ENCODE measurements at regions of chr17 and their contacts with region 1.

Region 1: GRCh38 chr17:32783602-32784001 is 93.3 kb downstream of the MYO1D start:
- DNase-seq: peak; percentile 53
- H3K4me3 Mint-ChIP-seq: no peak overlapping the region
- H3K27ac Mint-ChIP-seq: peak overlapping the region; percentile 73
- H3K4me1 Mint-ChIP-seq: peaks cover 5% of the 10 kb centered on the region
- H3K27me3 Mint-ChIP-seq: no peaks in the 10 kb centered on the region
- CTCF ChIP-seq: peak; percentile 63

Region 2: GRCh38 chr17:32769839-32770238 is 13.8 kb before region 1 on chr17:
- CTCF ChIA-PET with region 1: interaction called, 35 read pairs
- POLR2A ChIA-PET with region 1: interaction called, 6 read pairs
- intact Hi-C with region 1: no loop called
- DNase-seq: peak; percentile 71
- H3K4me3 Mint-ChIP-seq: no peak overlapping the region
- H3K27ac Mint-ChIP-seq: no peak overlapping the region
- H3K4me1 Mint-ChIP-seq: no peaks in the 10 kb centered on the region
- H3K27me3 Mint-ChIP-seq: no peaks in the 10 kb centered on the region
- CTCF ChIP-seq: peak; percentile 49

Region 3: DNA sequence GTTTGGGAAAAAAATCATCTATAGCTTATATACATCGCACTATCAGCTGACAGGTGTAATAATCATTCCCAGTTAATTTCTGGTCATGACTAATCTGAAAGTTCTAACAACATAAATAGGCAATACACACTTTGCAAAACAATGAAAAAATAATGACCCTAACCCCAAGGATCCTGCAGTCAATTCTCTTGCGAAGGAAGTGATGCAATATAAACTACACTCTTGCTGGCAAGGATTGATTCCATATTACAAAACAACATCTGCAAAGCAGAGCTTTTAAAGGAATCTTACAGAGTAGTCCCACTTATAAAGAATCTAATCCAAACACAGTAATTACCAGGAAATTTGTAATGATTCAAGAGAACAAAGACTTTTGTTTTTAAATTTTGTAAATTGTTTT is 19.9 kb after region 1 on chr17:
- CTCF ChIA-PET with region 1: interaction called, 26 read pairs
- POLR2A ChIA-PET with region 1: interaction called, 3 read pairs
- intact Hi-C with region 1: no loop called
- DNase-seq: peak; percentile 21
- H3K4me3 Mint-ChIP-seq: no peak overlapping the region
- H3K27ac Mint-ChIP-seq: no peak overlapping the region
- H3K4me1 Mint-ChIP-seq: peaks cover 9% of the 10 kb centered on the region
- H3K27me3 Mint-ChIP-seq: no peaks in the 10 kb centered on the region
- CTCF ChIP-seq: no peak

Region 4: DNA sequence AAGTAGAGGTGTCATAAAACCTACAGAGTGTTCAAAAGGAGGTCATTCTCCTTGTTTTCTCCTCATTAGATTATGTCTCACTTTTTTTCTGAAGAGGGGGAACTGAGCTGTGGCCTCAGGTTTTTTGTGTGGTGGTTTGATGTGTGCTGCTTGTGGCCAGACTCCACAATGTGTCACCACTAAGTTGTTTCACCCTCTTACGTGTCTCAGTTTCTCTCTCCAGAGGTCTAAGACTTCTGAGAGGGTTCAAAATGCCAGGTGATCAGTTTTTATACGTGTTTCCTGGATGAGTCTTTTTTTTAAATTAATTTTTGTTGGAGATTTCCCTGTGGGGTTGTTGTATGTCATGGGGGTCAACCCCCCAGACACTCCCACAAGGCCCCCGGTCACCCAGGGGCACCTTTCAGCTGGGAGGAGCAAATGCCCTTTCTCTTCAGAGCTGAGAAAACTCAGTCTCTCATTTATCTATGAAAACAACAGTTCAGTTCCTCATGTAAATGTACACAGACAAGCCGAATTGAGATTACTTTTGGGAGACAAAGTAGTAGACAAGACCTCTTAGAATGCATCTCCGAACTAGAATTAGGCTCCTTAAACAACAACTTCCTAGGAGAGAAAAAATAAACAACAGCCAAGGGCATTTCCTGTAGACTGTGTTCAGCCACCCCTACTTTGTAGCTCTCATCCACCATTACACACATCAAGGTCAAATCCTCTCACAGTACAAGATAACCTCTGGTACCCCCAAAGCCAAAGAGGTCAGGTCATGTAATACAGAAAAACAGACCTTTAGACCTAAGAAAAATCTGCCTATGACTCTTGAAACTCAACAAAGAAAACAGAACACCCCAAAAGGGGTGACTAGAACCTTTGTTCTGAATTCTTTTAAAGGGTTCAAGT is 120.4 kb after region 1 on chr17:
- CTCF ChIA-PET with region 1: interaction called, 102 read pairs
- POLR2A ChIA-PET with region 1: no interaction called
- intact Hi-C with region 1: no loop called
- DNase-seq: no peak
- H3K4me3 Mint-ChIP-seq: no peak overlapping the region
- H3K27ac Mint-ChIP-seq: no peak overlapping the region
- H3K4me1 Mint-ChIP-seq: no peaks in the 10 kb centered on the region
- H3K27me3 Mint-ChIP-seq: no peaks in the 10 kb centered on the region
- CTCF ChIP-seq: no peak

Region 5: DNA sequence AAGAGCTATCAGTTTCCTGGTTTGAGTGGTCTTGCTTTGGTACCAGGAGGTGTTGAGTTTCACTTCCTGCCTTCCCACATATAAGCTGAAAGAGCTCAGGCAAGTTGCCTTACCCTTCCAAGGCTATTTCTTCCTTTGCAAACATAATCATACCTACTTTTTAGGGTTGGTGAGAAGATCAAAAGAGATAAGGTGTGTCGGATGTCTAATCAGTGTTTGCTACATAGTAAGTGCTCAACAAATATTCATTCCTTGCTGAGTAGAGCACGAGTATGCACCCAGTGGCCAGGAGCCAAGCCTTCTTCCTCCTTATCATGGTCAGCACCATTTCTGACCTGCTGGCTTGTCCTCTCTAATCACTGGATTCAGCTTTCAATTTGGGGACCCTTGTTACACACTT is 131.6 kb after region 1 on chr17:
- CTCF ChIA-PET with region 1: interaction called, 102 read pairs
- POLR2A ChIA-PET with region 1: interaction called, 4 read pairs
- intact Hi-C with region 1: loop called (anchors 1 kb)
- DNase-seq: no peak
- H3K4me3 Mint-ChIP-seq: no peak overlapping the region
- H3K27ac Mint-ChIP-seq: no peak overlapping the region
- H3K4me1 Mint-ChIP-seq: no peaks in the 10 kb centered on the region
- H3K27me3 Mint-ChIP-seq: no peaks in the 10 kb centered on the region
- CTCF ChIP-seq: no peak

Region 6: GRCh38 chr17:32997753-32998632 is 214.4 kb after region 1 on chr17:
- CTCF ChIA-PET with region 1: interaction called, 25 read pairs
- POLR2A ChIA-PET with region 1: no interaction called
- intact Hi-C with region 1: loop called (anchors 1 kb)
- DNase-seq: peak; percentile 79
- H3K4me3 Mint-ChIP-seq: peak overlapping the region; percentile 61
- H3K27ac Mint-ChIP-seq: no peak overlapping the region
- H3K4me1 Mint-ChIP-seq: peaks cover 7% of the 10 kb centered on the region
- H3K27me3 Mint-ChIP-seq: no peaks in the 10 kb centered on the region
- CTCF ChIP-seq: peak; percentile 87

Region 7: DNA sequence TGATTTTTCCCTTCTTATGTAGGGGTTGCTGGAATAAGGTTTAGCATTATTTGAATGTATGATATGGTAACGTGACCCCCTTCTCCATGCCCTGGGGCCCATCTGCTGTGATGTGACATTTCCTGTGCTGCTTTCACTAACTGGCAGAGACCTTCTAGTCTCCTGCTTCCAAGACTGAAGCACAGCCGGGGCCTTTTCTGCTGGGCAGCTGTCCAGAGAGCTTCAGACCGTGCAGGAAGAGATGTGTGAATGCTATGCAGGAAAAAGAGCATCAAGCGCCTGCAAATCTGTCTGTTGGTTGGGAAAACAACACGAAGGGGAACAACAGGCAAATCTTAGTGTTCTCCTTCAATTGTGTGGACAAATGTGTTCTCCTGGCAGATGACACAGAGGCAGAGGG is 336.5 kb after region 1 on chr17:
- CTCF ChIA-PET with region 1: no interaction called
- POLR2A ChIA-PET with region 1: no interaction called
- intact Hi-C with region 1: no loop called
- DNase-seq: no peak
- H3K4me3 Mint-ChIP-seq: no peak overlapping the region
- H3K27ac Mint-ChIP-seq: no peak overlapping the region
- H3K4me1 Mint-ChIP-seq: peaks cover 20% of the 10 kb centered on the region
- H3K27me3 Mint-ChIP-seq: no peaks in the 10 kb centered on the region
- CTCF ChIP-seq: no peak